ENCODE measurements at regions of chr2 and their contacts with region 1.

Region 1: GRCh38 chr2:64914735-64915509 is 74.3 kb upstream of the SLC1A4 start:
- DNase-seq: peak in 1 of 2 experiments; percentile 13
- H3K4me3 ChIP-seq: no peak overlapping the region
- H3K4me3 Mint-ChIP-seq: no peak overlapping the region
- H3K27ac Mint-ChIP-seq: no peak overlapping the region
- H3K4me1 ChIP-seq: peaks cover 4% of the 10 kb centered on the region; the same call in 1 of the 2 replicates
- H3K4me1 Mint-ChIP-seq: peaks cover 19% of the 10 kb centered on the region
- H3K27me3 ChIP-seq: no peaks in the 10 kb centered on the region
- H3K27me3 Mint-ChIP-seq: no peaks in the 10 kb centered on the region
- CTCF ChIP-seq: no peak

Region 2: GRCh38 chr2:64228126-64228678 is 686.7 kb before region 1 on chr2:
- CTCF ChIA-PET with region 1: no interaction called
- POLR2A ChIA-PET with region 1: no interaction called
- intact Hi-C with region 1: no loop called
- DNase-seq: peak; percentile 79 to 80
- H3K4me3 ChIP-seq: peak overlapping the region; percentile 45
- H3K4me3 Mint-ChIP-seq: peak overlapping the region; percentile 89
- H3K27ac Mint-ChIP-seq: peak overlapping the region; percentile 73
- H3K4me1 ChIP-seq: 0 out of 2 replicates have a peak, but pooled peaks cover 5% of the 10 kb centered on the region
- H3K4me1 Mint-ChIP-seq: peaks cover 14% of the 10 kb centered on the region
- H3K27me3 ChIP-seq: no peaks in the 10 kb centered on the region
- H3K27me3 Mint-ChIP-seq: no peaks in the 10 kb centered on the region
- CTCF ChIP-seq: no peak

Region 3: GRCh38 chr2:64595397-64596160 is 319.3 kb before region 1 on chr2:
- CTCF ChIA-PET with region 1: interaction called, 3 read pairs
- POLR2A ChIA-PET with region 1: no interaction called
- intact Hi-C with region 1: loop called (anchors 1 kb)
- DNase-seq: peak in 1 of 2 experiments; percentile 26
- H3K4me3 ChIP-seq: no peak overlapping the region
- H3K4me3 Mint-ChIP-seq: no peak overlapping the region
- H3K27ac Mint-ChIP-seq: no peak overlapping the region
- H3K4me1 ChIP-seq: no peaks in the 10 kb centered on the region
- H3K4me1 Mint-ChIP-seq: no peaks in the 10 kb centered on the region
- H3K27me3 ChIP-seq: no peaks in the 10 kb centered on the region
- H3K27me3 Mint-ChIP-seq: no peaks in the 10 kb centered on the region
- CTCF ChIP-seq: peak in 1 of 2 experiments; percentile 58

Region 4: DNA sequence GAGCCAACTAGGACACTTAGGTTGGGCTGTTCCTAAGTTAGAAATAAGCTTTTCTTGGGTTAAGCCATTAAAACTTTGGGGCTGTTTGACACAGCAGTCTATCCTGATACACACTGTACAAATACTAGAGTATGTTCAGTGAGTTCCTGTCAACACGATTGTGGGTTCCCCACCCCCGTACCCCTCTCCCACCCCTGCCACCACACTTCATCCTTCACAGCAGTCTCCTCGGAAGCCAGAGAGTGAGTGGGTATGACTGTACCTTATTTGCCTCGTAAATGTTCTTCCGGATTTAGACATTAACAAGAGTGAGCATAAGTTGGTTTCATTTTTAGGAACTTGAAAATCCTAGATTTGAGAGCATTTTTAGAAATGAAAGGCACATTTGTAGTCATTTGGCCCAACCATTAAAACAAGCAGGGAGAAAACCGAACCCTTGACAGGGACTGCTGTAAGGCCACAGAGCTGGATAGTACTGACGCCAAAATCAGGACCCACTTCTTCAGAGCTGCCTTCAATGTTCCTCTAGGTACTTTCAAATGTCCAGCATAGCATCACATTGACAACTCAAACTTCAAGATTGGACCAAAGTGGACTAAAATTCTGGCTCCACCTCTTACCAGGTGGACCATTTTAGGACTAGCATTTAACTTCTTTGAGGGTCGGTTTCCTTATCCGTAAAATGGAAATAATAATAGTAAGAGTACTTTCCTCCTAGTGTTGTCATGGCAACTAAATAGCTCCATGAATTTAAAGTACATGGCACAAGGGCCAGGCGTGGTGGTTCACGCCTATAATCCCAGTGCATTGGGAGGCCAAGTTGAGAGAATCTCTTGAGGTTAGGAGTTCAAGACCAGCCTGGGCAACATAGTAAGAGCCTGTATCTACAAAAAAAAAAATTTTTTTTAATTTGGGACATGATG is 94.9 kb before region 1 on chr2:
- CTCF ChIA-PET with region 1: no interaction called
- POLR2A ChIA-PET with region 1: no interaction called
- intact Hi-C with region 1: no loop called
- DNase-seq: no peak
- H3K4me3 ChIP-seq: no peak overlapping the region
- H3K4me3 Mint-ChIP-seq: no peak overlapping the region
- H3K27ac Mint-ChIP-seq: no peak overlapping the region
- H3K4me1 ChIP-seq: peaks cover 43% of the 10 kb centered on the region
- H3K4me1 Mint-ChIP-seq: peaks cover 22% of the 10 kb centered on the region
- H3K27me3 ChIP-seq: no peaks in the 10 kb centered on the region
- H3K27me3 Mint-ChIP-seq: no peaks in the 10 kb centered on the region
- CTCF ChIP-seq: no peak

Region 5: DNA sequence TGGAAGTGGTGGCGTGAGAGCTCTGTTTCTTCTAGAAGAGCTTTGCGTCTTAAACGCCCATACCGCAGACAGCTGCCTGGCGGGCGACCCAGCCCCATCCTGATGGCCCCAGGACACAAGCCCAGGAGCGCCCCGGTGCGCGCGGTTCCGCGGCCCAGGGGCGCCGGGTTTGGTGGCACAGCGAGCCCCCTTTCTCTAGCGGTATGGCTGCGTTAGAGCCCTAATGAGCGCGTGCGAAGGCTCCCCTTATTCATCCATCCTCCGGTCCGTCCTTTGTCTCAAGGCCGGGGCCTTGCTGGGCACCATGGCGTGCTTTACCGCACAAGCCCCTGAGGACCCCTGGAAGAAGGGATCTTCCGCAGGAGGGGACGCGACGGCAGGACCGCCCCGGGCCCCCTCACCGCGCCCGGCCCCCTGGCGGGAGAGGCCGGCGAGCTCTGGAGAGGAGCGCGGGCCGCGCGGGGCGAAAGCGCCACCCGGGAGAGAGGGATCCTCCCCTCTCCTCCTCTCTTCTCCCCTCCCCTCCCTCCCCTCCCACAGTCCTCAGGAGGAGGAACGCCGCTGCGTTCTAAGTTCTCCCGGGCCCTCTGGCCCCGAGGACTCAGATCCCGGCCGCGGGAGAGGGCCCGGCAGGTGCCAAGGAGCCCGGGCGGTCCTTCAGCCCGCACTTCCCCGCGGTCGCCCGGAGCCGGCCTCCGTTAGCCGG is 73.7 kb after region 1 on chr2:
- CTCF ChIA-PET with region 1: interaction called, 12 read pairs
- POLR2A ChIA-PET with region 1: interaction called, 3 read pairs
- intact Hi-C with region 1: loop called (anchors 2 kb)
- DNase-seq: peak; percentile 60 to 69
- H3K4me3 ChIP-seq: peak overlapping the region; percentile 60
- H3K4me3 Mint-ChIP-seq: peak overlapping the region; percentile 92
- H3K27ac Mint-ChIP-seq: peak overlapping the region; percentile 28
- H3K4me1 ChIP-seq: peaks cover 9% of the 10 kb centered on the region; the same call in 1 of the 2 replicates
- H3K4me1 Mint-ChIP-seq: peaks cover 26% of the 10 kb centered on the region
- H3K27me3 ChIP-seq: no peaks in the 10 kb centered on the region
- H3K27me3 Mint-ChIP-seq: peaks cover 2% of the 10 kb centered on the region
- CTCF ChIP-seq: peak; percentile 28 to 78

Region 6: DNA sequence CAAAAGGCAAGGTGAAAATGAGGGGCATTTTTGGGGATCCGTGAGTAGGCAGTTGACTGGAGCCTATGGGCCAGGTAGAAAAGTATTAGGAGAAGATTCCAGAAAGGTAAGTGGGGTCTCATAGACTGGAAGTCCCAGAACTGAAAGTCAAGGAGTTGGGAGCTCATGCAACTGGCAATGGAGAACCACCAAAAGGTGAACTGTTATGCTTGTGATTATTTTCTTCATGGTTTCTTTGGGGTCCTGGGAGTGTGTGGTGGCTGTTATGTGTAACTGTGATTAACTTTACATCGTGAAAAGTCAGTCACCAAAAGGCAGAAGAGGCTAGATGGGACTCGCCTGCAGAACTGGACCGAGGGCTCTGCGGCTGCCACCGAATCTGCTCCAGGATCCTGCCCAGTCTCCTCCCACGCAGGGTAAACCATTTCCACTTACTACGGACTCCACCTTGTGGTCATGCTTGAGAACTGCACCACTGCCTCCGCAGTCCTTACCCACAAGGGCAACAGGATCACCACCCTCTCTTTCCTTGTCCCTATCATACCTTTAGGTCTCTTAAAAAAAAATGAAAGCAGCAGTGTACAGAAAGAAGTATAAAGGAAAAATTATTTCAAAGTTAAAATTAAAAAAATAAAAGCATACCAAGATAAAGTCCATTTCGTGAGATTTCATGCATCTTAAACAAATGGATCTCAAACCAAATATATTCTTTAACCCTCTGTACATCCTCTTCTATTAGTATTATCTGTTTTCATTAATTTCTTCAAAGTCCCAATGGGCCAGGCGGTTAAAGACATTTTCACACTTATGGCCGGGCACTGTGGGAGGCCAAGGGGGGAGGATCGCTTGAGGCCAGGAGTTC is 125.7 kb after region 1 on chr2:
- CTCF ChIA-PET with region 1: interaction called, 15 read pairs
- POLR2A ChIA-PET with region 1: no interaction called
- intact Hi-C with region 1: loop called (anchors 1 kb)
- DNase-seq: peak; percentile 83 to 87
- H3K4me3 ChIP-seq: no peak overlapping the region
- H3K4me3 Mint-ChIP-seq: peak overlapping the region; percentile 10
- H3K27ac Mint-ChIP-seq: no peak overlapping the region
- H3K4me1 ChIP-seq: no peaks in the 10 kb centered on the region
- H3K4me1 Mint-ChIP-seq: peaks cover 6% of the 10 kb centered on the region
- H3K27me3 ChIP-seq: no peaks in the 10 kb centered on the region
- H3K27me3 Mint-ChIP-seq: no peaks in the 10 kb centered on the region
- CTCF ChIP-seq: peak; percentile 90 to 97

Region 7: GRCh38 chr2:65186872-65187851 is 272.2 kb after region 1 on chr2:
- CTCF ChIA-PET with region 1: interaction called, 9 read pairs
- POLR2A ChIA-PET with region 1: no interaction called
- intact Hi-C with region 1: loop called (anchors 2 kb)
- DNase-seq: peak; percentile 83 to 90
- H3K4me3 ChIP-seq: no peak overlapping the region
- H3K4me3 Mint-ChIP-seq: no peak overlapping the region
- H3K27ac Mint-ChIP-seq: no peak overlapping the region
- H3K4me1 ChIP-seq: peaks cover 14% of the 10 kb centered on the region
- H3K4me1 Mint-ChIP-seq: peaks cover 14% of the 10 kb centered on the region
- H3K27me3 ChIP-seq: no peaks in the 10 kb centered on the region
- H3K27me3 Mint-ChIP-seq: peaks cover 4% of the 10 kb centered on the region
- CTCF ChIP-seq: peak; percentile 85 to 86